Activated CD4-positive, alpha-beta T cell treated with anti-CD3 and anti-CD28 coated beads, Interleukin-2, amount 10 ng/mL, durations not matched to agents 7 days and 5 days (primary cell): ENCODE measurements at regions of chr12 and their contacts with region 1.

Region 1: DNA sequence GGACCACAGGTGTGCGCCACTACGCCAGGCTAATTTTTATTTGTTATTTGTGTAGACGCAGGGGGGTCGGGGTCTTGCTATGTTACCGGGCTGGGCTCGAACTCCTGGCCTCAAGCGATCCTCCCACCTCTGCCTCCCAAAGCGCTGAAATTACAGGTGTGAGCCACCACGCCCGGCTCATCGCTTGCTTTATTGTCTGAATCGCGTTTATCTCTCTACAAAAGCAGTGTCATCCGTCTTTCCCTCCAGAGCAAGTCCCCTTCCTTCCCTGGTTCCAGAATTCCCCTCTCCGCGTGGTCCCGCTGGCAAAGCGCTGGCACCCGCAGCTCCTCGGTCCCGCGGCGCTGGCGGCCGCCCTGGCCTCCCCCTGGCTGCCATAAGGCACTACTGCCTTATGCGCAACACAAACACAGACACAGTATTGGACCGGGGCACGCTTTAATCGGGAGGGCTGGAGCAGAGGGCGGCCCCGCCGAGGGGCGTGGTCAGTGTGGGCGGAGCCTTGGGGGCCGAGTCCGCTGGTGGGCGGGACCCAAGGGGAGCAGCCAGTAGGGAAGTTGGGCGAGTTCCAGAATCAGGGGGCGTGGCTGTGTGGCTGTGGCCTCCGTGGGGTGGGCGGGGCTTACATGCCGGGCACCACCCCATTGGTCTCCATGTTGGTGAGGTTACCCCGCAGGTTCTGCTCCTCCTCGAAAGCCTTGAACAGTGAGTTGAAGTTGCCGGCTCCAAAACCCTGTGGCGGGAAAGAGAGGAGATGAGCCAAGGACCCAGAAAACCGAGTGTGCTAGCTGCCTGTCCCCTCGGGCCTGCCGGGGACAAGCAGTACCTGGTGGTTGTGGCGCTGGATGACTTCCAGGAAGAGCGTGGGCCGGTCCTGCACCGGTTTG is 19.3 kb downstream of the HPD start:
- DNase-seq: peak; percentile 99
- H3K4me3 Mint-ChIP-seq: peak overlapping the region; percentile 97
- H3K27ac Mint-ChIP-seq: peak overlapping the region; percentile 93
- H3K4me1 Mint-ChIP-seq: peaks cover 18% of the 10 kb centered on the region
- H3K27me3 Mint-ChIP-seq: no peaks in the 10 kb centered on the region

Region 2: GRCh38 chr12:121811434-121812319 is 27.7 kb before region 1 on chr12:
- CTCF ChIA-PET with region 1: interaction called, 27 read pairs
- POLR2A ChIA-PET with region 1: interaction called, 3 read pairs
- DNase-seq: peak; percentile 60
- H3K4me3 Mint-ChIP-seq: peak overlapping the region; percentile 78
- H3K27ac Mint-ChIP-seq: peak overlapping the region; percentile 78
- H3K4me1 Mint-ChIP-seq: peaks cover 57% of the 10 kb centered on the region
- H3K27me3 Mint-ChIP-seq: no peaks in the 10 kb centered on the region

Region 3: DNA sequence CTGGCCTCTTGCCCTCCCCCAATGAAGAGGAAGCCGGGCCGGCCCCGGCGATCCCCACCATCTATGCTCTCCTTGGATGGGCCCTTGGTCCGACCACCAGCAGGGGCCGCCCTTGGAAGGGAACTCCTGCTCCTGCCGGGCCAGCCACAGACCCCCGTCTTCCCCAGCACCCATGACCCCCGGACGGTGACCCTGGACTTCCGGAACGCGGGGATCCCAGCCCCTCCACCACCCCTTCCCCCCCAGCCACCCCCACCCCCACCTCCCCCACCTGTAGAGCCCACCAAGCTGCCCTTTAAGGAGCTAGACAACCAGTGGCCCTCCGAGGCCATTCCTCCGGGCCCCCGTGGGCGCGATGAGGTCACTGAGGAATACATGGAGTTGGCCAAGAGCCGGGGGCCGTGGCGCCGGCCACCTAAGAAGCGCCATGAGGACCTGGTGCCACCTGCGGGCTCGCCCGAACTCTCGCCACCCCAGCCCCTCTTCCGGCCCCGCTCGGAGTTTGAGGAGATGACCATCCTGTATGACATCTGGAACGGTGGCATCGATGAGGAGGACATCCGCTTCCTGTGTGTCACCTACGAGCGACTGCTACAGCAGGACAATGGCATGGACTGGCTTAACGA is 16.1 kb before region 1 on chr12:
- CTCF ChIA-PET with region 1: interaction called, 10 read pairs
- POLR2A ChIA-PET with region 1: no interaction called
- DNase-seq: no peak
- H3K4me3 Mint-ChIP-seq: no peak overlapping the region
- H3K27ac Mint-ChIP-seq: no peak overlapping the region
- H3K4me1 Mint-ChIP-seq: no peaks in the 10 kb centered on the region
- H3K27me3 Mint-ChIP-seq: no peaks in the 10 kb centered on the region